ENCODE measurements at regions of chr11 and their contacts with region 1.

Region 1: DNA sequence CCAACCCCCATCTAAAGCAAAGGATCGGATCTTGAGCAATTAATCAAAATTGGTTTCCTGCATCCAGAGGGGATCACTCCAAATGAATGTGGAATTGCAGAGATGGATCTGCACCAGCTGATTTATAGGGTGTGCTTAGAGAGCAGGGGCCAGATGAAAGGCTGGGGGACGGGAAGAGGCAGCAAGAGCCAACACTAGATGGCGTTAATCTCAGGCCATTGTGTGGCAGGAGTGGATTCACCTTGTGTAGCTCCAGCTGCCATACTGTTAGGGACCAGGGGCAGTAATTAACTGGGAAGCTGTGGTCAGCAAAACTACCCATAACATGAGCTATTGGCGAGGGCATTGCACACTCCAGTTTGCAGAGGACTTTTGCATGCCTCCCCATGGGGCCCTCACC is 35.6 kb downstream of the SERPINH1 start:
- H3K4me3 Mint-ChIP-seq: no peak overlapping the region
- H3K27ac Mint-ChIP-seq: no peak overlapping the region
- H3K4me1 Mint-ChIP-seq: peaks cover 13% of the 10 kb centered on the region
- H3K27me3 Mint-ChIP-seq: peaks cover 34% of the 10 kb centered on the region

Region 2: GRCh38 chr11:75450826-75451821 is 146.5 kb before region 1 on chr11:
- intact Hi-C with region 1: no loop called
- H3K4me3 Mint-ChIP-seq: no peak overlapping the region
- H3K27ac Mint-ChIP-seq: no peak overlapping the region
- H3K4me1 Mint-ChIP-seq: no peaks in the 10 kb centered on the region
- H3K27me3 Mint-ChIP-seq: no peaks in the 10 kb centered on the region

Region 3: GRCh38 chr11:75667831-75668450 is 70.3 kb after region 1 on chr11:
- intact Hi-C with region 1: loop called (anchors 10 kb)
- H3K4me3 Mint-ChIP-seq: peak overlapping the region; percentile 71
- H3K27ac Mint-ChIP-seq: no peak overlapping the region
- H3K4me1 Mint-ChIP-seq: peaks cover 20% of the 10 kb centered on the region
- H3K27me3 Mint-ChIP-seq: peaks cover 85% of the 10 kb centered on the region

Measured in dendritic cell treated with granulocyte-macrophage colony-stimulating factor and Interleukin-4, amounts not matched to agents 40 ng/mL and 50 ng/mL, for 4 days (primary cell).